Aorta (tissue), 5 donors: ENCODE measurements at regions of chr5 and their contacts with region 1.

Region 1: GRCh38 chr5:150458819-150459557 is 9.4 kb upstream of the RPS14 start:
- DNase-seq: peak; percentile 81 to 96
- ATAC-seq: peak; percentile 96
- H3K4me3 ChIP-seq: no peak overlapping the region
- H3K27ac ChIP-seq: no peak overlapping the region
- H3K4me1 ChIP-seq: no peaks in the 10 kb centered on the region
- H3K27me3 ChIP-seq: no peaks in the 10 kb centered on the region

Region 2: DNA sequence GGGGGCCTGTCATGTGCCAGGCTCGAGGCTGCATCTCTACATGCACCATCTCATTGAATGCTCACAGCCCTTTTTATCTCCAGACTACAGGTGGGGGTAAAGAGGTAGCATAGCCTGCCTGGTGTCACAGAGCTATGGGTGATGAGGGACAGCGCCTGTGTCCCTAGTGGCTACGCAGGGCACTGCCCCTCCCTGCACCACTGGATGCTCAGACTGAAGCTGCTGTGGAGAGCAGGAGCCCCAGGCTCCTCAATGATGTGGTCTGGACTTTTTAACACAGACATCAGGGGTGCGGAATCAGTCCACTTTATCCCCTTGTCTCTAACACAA is 172.1 kb before region 1 on chr5:
- intact Hi-C with region 1: no loop called
- DNase-seq: peak in 1 of 2 donors; percentile 62
- ATAC-seq: no peak
- H3K4me3 ChIP-seq: no peak overlapping the region
- H3K27ac ChIP-seq: no peak overlapping the region
- H3K4me1 ChIP-seq: no peaks in the 10 kb centered on the region
- H3K27me3 ChIP-seq: no peaks in the 10 kb centered on the region

Region 3: GRCh38 chr5:150523472-150524350 is 64.7 kb after region 1 on chr5:
- intact Hi-C with region 1: loop called (anchors 2 to 5 kb)
- DNase-seq: no peak
- ATAC-seq: peak; percentile 70
- H3K4me3 ChIP-seq: no peak overlapping the region
- H3K27ac ChIP-seq: no peak overlapping the region
- H3K4me1 ChIP-seq: peaks cover 0 to 3% of the 10 kb centered on the region in 2 donors
- H3K27me3 ChIP-seq: no peaks in the 10 kb centered on the region

Region 4: GRCh38 chr5:150544611-150545219 is 85.7 kb after region 1 on chr5:
- intact Hi-C with region 1: loop called in 1 of 2 experiments (anchors 5 kb)
- DNase-seq: peak; percentile 74 to 90
- ATAC-seq: peak; percentile 74
- H3K4me3 ChIP-seq: no peak overlapping the region
- H3K27ac ChIP-seq: peak overlapping the region; percentile 58 to 72
- H3K4me1 ChIP-seq: peaks cover 0 to 2% of the 10 kb centered on the region in 2 donors
- H3K27me3 ChIP-seq: no peaks in the 10 kb centered on the region

Region 5: GRCh38 chr5:150560401-150561193 is 101.6 kb after region 1 on chr5:
- intact Hi-C with region 1: loop called in 1 of 2 experiments (anchors 5 kb)
- DNase-seq: peak in 1 of 2 donors; percentile 85
- ATAC-seq: peak; percentile 92
- H3K4me3 ChIP-seq: no peak overlapping the region
- H3K27ac ChIP-seq: no peak overlapping the region
- H3K4me1 ChIP-seq: no peaks in the 10 kb centered on the region
- H3K27me3 ChIP-seq: no peaks in the 10 kb centered on the region

Region 6: GRCh38 chr5:150582241-150583109 is 123.5 kb after region 1 on chr5:
- intact Hi-C with region 1: no loop called
- DNase-seq: peak in 1 of 2 donors; percentile 53
- ATAC-seq: no peak
- H3K4me3 ChIP-seq: no peak overlapping the region
- H3K27ac ChIP-seq: no peak overlapping the region
- H3K4me1 ChIP-seq: no peaks in the 10 kb centered on the region
- H3K27me3 ChIP-seq: no peaks in the 10 kb centered on the region

Region 7: DNA sequence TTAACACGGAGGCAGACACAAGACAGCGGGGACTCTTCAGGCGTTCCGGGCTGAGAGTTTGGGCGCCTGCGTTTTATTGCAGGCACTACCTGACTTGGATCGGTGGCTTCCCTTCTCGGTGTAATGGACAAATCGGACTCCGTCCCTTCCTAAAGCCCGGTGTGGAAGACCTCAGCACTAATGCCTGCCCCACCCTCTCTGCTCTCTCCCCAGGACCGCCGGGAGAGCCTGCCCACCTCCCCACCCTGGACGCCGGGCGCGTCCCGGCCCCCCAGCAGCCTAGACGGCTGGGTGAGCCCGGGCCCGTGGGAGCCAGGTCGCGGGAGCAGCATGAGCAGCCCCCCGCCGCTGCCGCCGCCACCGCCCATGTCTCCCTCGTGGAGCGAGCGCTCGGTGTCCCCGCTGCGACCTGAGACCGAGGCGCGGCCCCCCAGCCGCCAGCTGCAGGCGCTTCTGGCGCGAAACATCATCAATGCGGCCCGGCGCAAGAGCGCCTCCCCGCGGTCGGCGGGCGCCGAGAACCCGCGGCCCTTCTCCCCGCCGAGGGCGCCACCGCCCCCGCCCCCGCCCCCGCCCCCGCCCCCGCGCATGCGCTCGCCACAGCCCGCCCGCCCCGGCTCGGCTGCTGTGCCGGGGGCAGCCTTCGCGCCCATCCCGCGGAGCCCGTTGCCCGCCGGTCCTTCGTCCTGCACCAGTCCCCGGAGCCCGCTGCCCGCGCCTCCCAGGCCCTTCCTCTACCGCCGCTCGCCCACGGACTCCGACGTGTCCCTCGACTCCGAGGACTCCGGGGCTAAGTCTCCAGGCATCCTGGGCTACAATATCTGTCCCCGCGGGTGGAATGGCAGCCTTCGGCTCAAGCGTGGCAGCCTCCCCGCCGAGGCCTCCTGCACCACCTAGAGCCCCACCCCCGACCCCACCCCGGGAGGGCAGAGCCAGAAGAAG is 197.5 kb after region 1 on chr5:
- intact Hi-C with region 1: loop called in 1 of 2 experiments (anchors 10 kb)
- DNase-seq: peak; percentile 81 to 93
- ATAC-seq: peak; percentile 60
- H3K4me3 ChIP-seq: no peak overlapping the region
- H3K27ac ChIP-seq: peak overlapping the region; percentile 18 to 82
- H3K4me1 ChIP-seq: no peaks in the 10 kb centered on the region
- H3K27me3 ChIP-seq: no peaks in the 10 kb centered on the region

Region 8: DNA sequence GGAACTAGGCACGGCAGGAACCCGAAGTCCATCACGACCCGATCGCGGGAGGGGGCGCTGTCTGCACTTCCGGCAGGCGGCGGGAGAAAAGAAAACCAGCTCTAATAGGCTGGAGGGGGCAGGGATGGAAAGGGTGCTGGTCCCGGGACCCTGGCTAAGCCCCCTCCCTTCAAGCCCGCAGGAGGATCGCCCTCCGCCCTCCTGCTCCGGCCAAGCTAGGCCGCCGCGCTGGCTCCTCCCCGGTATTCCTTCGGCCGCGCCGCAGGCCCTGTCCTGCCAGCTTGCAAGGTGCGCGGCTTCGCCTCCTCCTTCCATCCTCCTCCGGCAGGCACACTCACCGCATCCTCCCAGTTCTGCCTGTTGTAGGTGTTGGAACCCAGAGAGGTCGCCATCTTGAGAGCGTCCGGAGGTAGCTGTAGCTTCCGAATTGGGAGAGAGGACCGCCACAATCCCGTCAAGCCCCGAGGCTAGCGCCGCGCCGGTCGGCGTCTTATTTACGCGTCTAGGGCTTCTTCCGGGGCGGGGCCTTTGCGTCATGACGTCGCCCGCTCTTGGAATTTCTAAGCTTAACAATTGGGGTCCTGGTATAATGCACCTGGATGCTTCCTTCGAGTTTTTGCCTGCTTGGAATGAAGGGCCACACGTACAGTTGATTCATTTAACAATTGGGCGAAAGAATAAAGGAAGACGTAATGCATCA is 241.8 kb after region 1 on chr5 and contains the start of gene RBM22:
- intact Hi-C with region 1: loop called in 1 of 2 experiments (anchors 10 kb)
- DNase-seq: peak; percentile 96 to 97
- ATAC-seq: peak; percentile 99
- H3K4me3 ChIP-seq: peak within 1 kb of the TSS; percentile 68 to 94
- H3K27ac ChIP-seq: peak within 1 kb of the TSS; percentile 57 to 93
- H3K4me1 ChIP-seq: peaks cover 0 to 3% of the 10 kb centered on the region in 2 donors
- H3K27me3 ChIP-seq: no peaks in the 10 kb centered on the region
- total RNA-seq, gene RBM22: 40.1 to 46.9 TPM